Activated CD4-positive, alpha-beta T cell treated with anti-CD3 and anti-CD28 coated beads for 36 hours (primary cell): ENCODE measurements at regions of chr17 and their contacts with region 1.

Region 1: GRCh38 chr17:19260958-19261357 is 23.8 kb downstream of the EPN2 start:
- DNase-seq: no peak
- ATAC-seq: no peak
- H3K4me3 Mint-ChIP-seq: no peak overlapping the region
- H3K27ac Mint-ChIP-seq: no peak overlapping the region
- H3K4me1 Mint-ChIP-seq: peaks cover 10% of the 10 kb centered on the region
- H3K27me3 Mint-ChIP-seq: peaks cover 9% of the 10 kb centered on the region

Region 2: DNA sequence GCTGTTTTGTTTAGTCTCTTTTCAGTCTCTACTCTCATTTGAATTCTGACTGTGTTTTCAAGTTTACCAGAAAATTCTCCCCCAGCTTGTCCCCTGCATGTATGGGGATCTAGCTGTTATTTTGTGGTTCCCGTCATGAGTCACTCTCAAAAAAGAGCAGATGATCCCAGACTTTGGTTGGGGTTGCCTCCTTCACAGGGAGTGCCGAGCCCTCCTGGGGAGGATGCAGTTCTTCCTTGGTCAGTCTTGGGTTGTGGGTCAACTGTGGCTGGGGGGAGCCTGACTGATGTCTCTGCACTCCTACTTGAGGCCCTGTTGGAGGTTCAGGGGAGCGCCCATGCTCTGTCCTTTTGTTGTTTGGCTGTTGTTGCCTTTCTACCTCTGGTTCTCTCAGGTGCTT is 13.9 kb after region 1 on chr17:
- CTCF ChIA-PET with region 1: no interaction called
- POLR2A ChIA-PET with region 1: no interaction called
- intact Hi-C with region 1: loop called in 1 of 2 experiments (anchors 1 kb)
- DNase-seq: no peak
- ATAC-seq: no peak
- H3K4me3 Mint-ChIP-seq: no peak overlapping the region
- H3K27ac Mint-ChIP-seq: no peak overlapping the region
- H3K4me1 Mint-ChIP-seq: peaks cover 6% of the 10 kb centered on the region
- H3K27me3 Mint-ChIP-seq: peaks cover 4% of the 10 kb centered on the region

Region 3: DNA sequence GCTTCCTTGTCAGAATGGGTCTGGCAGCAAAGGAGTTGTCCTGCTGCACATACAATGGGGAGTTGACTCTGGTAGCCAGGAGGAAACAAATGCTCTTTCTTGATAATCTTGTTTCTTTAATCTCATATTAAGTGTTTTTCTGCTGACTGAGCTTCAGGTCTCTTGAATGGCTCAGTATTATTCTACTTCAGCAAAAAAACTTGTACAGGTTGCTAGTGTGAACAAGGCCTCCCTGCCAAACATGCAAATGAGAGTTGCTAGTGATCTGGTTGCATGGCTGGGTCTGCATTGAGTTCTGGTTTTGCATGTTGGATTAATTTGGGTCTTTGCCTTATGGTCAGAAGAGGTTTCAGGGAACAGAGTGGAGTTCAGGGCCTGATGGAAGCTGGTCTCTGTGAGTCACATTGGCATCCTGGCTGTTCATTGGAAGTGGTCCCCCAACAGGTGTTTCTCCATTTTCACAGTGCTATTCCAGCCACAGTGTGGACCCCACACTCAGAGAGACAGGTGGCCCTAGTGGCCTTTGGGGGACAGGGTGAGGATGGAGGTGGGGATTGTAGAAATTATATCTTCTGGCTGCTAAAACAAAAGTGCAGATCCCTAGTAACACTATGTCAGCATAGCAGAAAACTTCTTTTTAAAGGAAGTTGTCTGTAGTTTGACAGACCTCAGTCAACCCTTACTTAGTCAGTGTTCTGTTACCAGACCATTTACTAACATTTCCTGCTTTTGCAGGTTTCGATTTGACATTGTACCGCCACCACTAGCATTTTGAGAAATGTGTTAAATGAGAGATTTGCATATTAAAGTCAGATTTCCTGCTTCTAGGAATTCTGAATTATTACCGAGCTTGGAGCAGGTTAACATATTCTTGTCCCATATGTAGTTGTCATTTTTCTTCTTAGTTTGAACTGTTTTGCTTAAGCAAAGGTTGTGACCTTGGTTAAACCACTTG is 23.3 kb after region 1 on chr17:
- CTCF ChIA-PET with region 1: no interaction called
- POLR2A ChIA-PET with region 1: no interaction called
- intact Hi-C with region 1: loop called in 1 of 2 experiments (anchors 1 kb)
- DNase-seq: peak; percentile 33
- ATAC-seq: peak; percentile 93
- H3K4me3 Mint-ChIP-seq: no peak overlapping the region
- H3K27ac Mint-ChIP-seq: peak overlapping the region; percentile 16
- H3K4me1 Mint-ChIP-seq: peaks cover 15% of the 10 kb centered on the region
- H3K27me3 Mint-ChIP-seq: peaks cover 10% of the 10 kb centered on the region

Region 4: DNA sequence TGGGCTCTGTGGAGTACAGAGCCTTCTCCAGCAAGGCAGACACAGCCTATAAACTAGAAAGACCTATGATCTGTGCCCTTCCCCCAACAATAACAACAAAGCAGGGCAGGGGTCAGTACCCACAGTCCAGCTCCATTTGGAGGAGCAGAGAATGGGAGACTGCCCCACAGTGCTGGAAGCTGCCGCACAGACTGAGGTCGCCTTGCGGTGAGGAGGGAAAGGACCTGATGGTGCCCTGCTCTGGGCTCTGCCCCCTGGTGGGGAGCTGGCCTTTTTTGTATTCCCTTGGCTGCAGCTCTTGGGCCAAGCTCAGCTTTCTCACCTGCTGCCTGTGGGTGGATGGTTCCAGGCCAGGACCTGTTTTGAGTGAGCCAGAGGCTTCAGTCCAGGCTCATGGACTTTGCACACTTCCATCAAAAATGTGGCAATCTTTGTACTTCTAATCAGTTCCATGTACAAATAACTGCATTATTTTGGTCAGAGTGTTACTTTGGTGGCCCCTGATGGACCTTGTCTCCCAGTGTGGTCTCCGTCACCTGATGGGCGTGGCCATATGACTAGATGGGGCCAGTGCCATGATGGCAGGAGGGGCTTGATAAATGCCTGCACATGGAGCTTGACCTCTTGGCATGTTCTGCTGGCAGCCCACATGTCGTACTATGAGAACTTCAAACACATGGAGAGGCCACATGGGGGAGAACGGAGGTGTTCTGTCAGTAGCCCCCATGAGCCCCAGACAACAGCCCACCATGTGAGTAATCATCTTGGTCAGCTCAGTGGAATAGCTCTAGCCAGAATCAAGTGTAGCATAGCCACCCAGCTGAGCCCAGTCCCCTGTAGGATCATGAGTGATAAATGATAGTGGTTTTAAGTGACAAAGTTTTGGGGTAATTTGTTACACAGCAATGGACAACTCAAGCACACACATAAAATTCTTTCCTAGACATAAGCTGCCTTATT is 77.4 kb after region 1 on chr17:
- CTCF ChIA-PET with region 1: no interaction called
- POLR2A ChIA-PET with region 1: no interaction called
- intact Hi-C with region 1: loop called in 1 of 2 experiments (anchors 5 kb)
- DNase-seq: peak; percentile 81
- ATAC-seq: peak; percentile 89
- H3K4me3 Mint-ChIP-seq: no peak overlapping the region
- H3K27ac Mint-ChIP-seq: no peak overlapping the region
- H3K4me1 Mint-ChIP-seq: no peaks in the 10 kb centered on the region
- H3K27me3 Mint-ChIP-seq: peaks cover 16% of the 10 kb centered on the region